Gastrocnemius medialis (tissue), 4 donors: ENCODE measurements at regions of chr5 and their contacts with region 1.

Region 1: DNA sequence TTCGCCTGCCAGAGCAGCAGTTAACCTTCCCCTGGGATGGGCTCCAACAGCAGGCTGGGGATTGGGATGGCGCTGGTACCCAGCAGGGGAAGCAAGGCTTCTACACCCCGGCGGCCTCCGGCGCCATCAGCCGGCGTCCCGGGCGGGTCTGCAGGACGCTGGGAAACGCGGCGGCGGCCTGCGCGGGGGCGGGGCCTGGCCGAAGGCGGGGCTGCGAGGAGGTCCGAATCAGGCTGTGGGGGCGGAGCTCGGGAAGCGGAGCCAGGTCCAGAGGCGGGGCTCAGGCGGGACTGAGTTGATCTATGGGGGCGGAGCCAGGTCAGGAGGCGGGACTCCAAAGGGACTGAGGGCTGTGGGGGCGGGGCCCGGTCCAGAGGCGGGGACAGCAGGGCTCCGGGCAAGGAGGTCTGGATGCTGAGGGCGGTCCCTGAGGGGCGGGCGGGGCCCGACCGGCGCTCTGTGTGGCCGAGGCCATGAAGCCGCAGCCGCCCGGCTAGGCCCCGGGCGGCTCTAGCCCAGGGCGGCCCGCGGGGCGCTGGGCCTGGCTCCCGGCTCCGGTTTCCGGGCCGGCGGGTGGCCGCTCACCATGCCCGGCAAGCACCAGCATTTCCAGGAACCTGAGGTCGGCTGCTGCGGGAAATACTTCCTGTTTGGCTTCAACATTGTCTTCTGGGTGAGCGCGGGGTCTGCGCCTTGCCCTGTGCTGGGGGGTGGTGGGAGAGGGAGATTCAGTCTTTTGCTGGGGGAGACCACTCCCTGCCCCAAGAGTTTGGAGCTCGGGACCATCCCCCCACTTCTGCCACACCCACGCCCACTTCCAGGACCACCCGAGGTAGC is at the start of gene TSPAN17:
- DNase-seq: peak; percentile 100
- ATAC-seq: peak; percentile 95 to 96
- H3K4me3 ChIP-seq: peak within 1 kb of the TSS; percentile 74 to 87 (median 80)
- H3K27ac ChIP-seq: peak within 1 kb of the TSS; percentile 77 to 85 (median 83)
- H3K4me1 ChIP-seq: peaks cover 12 to 17% of the 10 kb centered on the region in 2 donors
- H3K27me3 ChIP-seq: no peaks in the 10 kb centered on the region
- CTCF ChIP-seq: peak in 4 of 5 experiments; percentile 25 to 58 (median 48)
- POLR2A ChIP-seq: peak; percentile 65 to 67
- total RNA-seq, gene TSPAN17: 13.3 to 35.7 (median 27.2) TPM

Region 2: DNA sequence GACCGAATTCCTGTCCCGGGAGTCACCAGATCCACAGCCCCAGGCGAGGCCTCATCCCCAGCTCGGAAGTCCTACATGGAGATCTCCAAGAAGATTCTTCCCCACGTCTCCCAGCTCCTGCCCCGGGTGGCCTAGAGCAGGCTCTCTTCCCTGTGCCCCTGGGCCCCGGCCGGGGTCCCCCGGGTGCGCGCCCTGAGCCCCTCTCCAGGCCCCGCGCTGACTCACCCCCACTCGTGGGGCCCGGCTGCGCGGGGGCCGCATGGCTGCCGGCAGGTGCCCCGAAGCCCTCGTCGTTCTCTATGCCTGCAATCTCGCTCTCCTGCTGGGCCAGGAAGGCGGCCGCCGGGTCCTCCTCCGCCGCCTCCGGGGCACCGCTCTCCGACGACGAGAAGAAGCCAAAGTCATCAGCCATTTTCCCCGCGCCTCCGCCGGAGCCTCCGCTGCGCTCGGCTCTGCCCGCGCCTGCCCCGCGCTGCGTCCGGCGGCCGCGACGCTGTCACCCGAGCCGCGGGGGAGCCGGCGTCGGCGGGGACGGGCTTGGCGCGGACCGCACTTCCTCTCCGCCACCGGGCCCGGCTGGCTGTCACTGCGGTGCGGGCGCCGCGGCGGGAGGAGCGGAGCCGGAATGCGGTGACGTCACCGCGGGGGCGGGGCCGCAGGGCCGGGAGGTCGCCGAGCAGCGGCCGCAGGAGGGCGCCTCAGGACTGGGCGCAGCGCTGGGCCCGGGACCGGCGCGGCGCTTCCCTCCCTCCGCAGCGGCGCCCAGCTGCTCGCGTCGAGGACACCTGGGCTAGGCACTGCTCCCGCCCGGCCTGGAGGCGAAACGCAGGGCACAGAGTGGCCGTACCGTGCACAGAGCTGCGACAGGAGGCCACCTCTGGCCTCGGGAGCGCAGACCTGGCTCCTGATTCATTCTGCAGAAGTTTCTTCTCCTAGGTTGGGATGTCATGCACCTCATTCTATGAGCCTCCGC is 231.0 kb before region 1 on chr5 and contains the start of gene CLTB:
- in situ Hi-C with region 1: no loop called
- intact Hi-C with region 1: loop called (anchors 1 kb)
- DNase-seq: peak; percentile 83 to 89
- ATAC-seq: peak; percentile 83 to 88
- H3K4me3 ChIP-seq: peak within 1 kb of the TSS; percentile 76 to 97 (median 92)
- H3K27ac ChIP-seq: peak within 1 kb of the TSS; percentile 88 to 99 (median 98)
- H3K4me1 ChIP-seq: peaks cover 39 to 41% of the 10 kb centered on the region in 2 donors
- H3K27me3 ChIP-seq: no peaks in the 10 kb centered on the region
- CTCF ChIP-seq: peak; percentile 53 to 93 (median 91)
- POLR2A ChIP-seq: peak; percentile 95 to 96
- total RNA-seq, gene CLTB: 261 to 386 (median 302) TPM

Region 3: GRCh38 chr5:176543428-176544173 is 103.6 kb before region 1 on chr5:
- in situ Hi-C with region 1: no loop called
- intact Hi-C with region 1: loop called (anchors 1 kb)
- DNase-seq: peak; percentile 54 to 76
- ATAC-seq: peak; percentile 86 to 88
- H3K4me3 ChIP-seq: peak overlapping the region; percentile 69 to 77 (median 74)
- H3K27ac ChIP-seq: peak overlapping the region; percentile 91 to 99 (median 94)
- H3K4me1 ChIP-seq: peaks cover 20 to 27% of the 10 kb centered on the region in 2 donors
- H3K27me3 ChIP-seq: no peaks in the 10 kb centered on the region
- CTCF ChIP-seq: no peak
- POLR2A ChIP-seq: peak; percentile 77

Region 4: GRCh38 chr5:176573564-176574296 is 73.5 kb before region 1 on chr5:
- in situ Hi-C with region 1: no loop called
- intact Hi-C with region 1: loop called (anchors 1 kb)
- DNase-seq: peak; percentile 36 to 43
- ATAC-seq: peak; percentile 84 to 93
- H3K4me3 ChIP-seq: no peak overlapping the region
- H3K27ac ChIP-seq: no peak overlapping the region
- H3K4me1 ChIP-seq: no peaks in the 10 kb centered on the region
- H3K27me3 ChIP-seq: peaks cover 2 to 3% (median 2%) of the 10 kb centered on the region in 3 donors
- CTCF ChIP-seq: peak; percentile 67 to 88 (median 84)
- POLR2A ChIP-seq: no peak

Region 5: GRCh38 chr5:176611435-176611834 is 35.8 kb before region 1 on chr5:
- in situ Hi-C with region 1: no loop called
- intact Hi-C with region 1: loop called (anchors 1 kb)
- DNase-seq: peak in 1 of 2 donors; percentile 32
- ATAC-seq: no peak
- H3K4me3 ChIP-seq: no peak overlapping the region
- H3K27ac ChIP-seq: no peak overlapping the region
- H3K4me1 ChIP-seq: peaks cover 0 to 4% of the 10 kb centered on the region in 2 donors
- H3K27me3 ChIP-seq: peaks cover 8 to 19% (median 15%) of the 10 kb centered on the region in 3 donors
- CTCF ChIP-seq: no peak
- POLR2A ChIP-seq: no peak

Region 6: DNA sequence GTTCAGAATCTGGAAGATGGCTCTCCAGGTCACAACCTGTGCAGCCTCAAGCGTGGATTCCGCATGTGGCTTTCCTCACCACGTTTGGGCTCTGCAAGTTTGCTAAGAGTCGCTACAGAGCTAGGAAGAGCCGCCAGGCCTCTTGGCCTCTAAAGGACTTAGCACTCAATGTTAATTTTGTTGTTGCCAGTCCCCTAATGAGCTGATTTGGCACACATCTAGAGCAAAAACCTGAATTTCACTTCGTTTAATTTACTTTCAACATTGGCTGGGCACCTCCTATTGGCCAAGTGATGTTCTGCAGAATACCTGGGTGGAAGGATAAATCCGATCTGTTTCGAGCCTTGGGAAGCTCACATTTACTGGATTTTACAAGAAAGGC is 97.3 kb after region 1 on chr5:
- in situ Hi-C with region 1: no loop called
- intact Hi-C with region 1: no loop called
- DNase-seq: no peak
- ATAC-seq: no peak
- H3K4me3 ChIP-seq: no peak overlapping the region
- H3K27ac ChIP-seq: no peak overlapping the region
- H3K4me1 ChIP-seq: no peaks in the 10 kb centered on the region
- H3K27me3 ChIP-seq: peaks cover 57 to 78% (median 67%) of the 10 kb centered on the region in 3 donors
- CTCF ChIP-seq: no peak
- POLR2A ChIP-seq: no peak

Region 7: DNA sequence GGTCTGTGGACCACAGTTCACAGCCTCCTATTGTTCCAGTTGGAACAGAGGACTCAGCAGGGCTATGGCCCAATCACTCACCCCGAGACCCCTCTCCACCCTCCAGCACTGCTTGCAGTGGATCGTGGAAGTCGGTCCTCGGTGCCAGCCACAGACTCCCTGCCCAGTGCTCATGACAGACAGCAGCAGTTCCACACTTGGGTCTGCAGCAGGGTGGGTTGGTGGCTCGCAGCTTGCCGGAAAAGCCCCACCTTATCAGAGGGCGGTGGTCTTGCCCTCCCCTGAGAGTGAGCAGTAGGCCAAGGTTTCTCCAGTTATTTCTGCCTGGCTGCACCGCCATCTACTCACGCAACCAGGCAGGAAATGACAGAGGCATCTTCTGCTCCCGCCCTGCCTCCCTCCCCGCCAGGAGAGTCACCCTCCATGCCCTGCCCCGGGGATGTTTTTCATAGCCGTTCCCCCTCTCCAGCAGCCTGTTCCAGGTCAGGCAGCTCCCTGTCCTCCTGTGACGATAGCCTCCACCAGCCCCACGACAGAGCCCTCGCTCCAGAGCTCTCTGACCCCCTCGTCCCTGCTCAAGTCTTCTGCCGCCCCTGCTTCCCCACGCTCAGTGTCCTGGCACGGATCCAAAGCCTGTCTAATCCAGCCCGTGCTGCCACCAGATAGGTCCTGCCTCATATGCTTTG is 197.6 kb after region 1 on chr5:
- in situ Hi-C with region 1: no loop called
- intact Hi-C with region 1: no loop called
- DNase-seq: no peak
- ATAC-seq: no peak
- H3K4me3 ChIP-seq: no peak overlapping the region
- H3K27ac ChIP-seq: no peak overlapping the region
- H3K4me1 ChIP-seq: no peaks in the 10 kb centered on the region
- H3K27me3 ChIP-seq: peaks cover 20 to 52% (median 40%) of the 10 kb centered on the region in 3 donors
- CTCF ChIP-seq: no peak
- POLR2A ChIP-seq: no peak